Activated T-helper 1 cell treated with anti-CD3 and anti-CD28 coated beads, Interleukin-12 subunit alpha, Interleukin-12 subunit beta, Interleukin-2, Interleukin-4 antibody, amounts not matched to agents 30 ng/mL and 10 ng/mL and 1 ng/mL, durations not matched to agents 14 hours and 24 hours and 36 hours (primary cell): ENCODE measurements at regions of chr4 and their contacts with region 1.

Region 1: DNA sequence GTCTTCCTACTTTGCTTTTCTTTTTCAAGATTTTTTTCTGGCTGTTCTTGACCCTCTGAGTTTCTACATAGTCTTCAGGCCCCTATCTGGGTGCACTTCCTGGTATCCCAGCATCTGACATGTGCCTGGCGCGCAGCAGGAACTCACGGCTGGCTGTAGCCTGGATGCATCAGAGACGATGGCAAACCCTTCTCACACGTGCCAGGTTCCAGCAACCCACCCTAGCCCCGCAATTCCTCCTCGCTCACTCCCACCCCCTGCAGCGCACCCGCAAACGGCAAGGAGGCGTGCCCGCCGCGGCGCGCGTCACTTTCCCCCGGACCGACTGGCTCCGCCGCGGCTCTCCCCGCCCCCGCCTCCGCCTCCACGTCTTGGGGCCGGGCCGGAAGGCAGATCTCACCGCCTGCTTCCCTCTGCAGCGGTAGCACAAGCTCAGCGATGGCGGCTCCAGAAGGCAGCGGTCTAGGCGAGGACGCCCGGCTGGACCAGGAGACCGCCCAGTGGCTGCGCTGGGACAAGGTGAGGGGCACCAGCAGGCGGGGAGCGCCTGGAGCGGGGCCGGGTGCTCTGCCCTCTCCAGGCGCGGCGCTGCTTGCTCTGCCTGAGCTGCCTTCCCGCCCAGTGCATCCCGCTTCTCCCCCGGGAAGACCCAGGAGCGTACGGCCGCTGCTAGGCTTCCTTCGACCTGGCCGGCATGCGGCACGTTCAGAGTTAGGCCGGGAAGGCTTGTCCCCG is at the start of gene PGM2:
- DNase-seq: peak; percentile 88
- H3K4me3 Mint-ChIP-seq: peak within 1 kb of the TSS; percentile 87
- H3K27ac Mint-ChIP-seq: peak within 1 kb of the TSS; percentile 86
- H3K4me1 Mint-ChIP-seq: peaks cover 40% of the 10 kb centered on the region
- H3K27me3 Mint-ChIP-seq: no peaks in the 10 kb centered on the region
- total RNA-seq, gene PGM2: 43.0 and 50.0 TPM in 2 replicates

Region 2: GRCh38 chr4:37502077-37502476 is 324.4 kb before region 1 on chr4:
- intact Hi-C with region 1: no loop called
- DNase-seq: no peak
- H3K4me3 Mint-ChIP-seq: no peak overlapping the region
- H3K27ac Mint-ChIP-seq: no peak overlapping the region
- H3K4me1 Mint-ChIP-seq: no peaks in the 10 kb centered on the region
- H3K27me3 Mint-ChIP-seq: peaks cover 10% of the 10 kb centered on the region

Region 3: GRCh38 chr4:37715889-37716402 is 110.5 kb before region 1 on chr4:
- intact Hi-C with region 1: loop called (anchors 2 kb)
- DNase-seq: peak; percentile 9
- H3K4me3 Mint-ChIP-seq: no peak overlapping the region
- H3K27ac Mint-ChIP-seq: peak overlapping the region; percentile 88
- H3K4me1 Mint-ChIP-seq: peaks cover 24% of the 10 kb centered on the region
- H3K27me3 Mint-ChIP-seq: peaks cover 2% of the 10 kb centered on the region

Region 4: DNA sequence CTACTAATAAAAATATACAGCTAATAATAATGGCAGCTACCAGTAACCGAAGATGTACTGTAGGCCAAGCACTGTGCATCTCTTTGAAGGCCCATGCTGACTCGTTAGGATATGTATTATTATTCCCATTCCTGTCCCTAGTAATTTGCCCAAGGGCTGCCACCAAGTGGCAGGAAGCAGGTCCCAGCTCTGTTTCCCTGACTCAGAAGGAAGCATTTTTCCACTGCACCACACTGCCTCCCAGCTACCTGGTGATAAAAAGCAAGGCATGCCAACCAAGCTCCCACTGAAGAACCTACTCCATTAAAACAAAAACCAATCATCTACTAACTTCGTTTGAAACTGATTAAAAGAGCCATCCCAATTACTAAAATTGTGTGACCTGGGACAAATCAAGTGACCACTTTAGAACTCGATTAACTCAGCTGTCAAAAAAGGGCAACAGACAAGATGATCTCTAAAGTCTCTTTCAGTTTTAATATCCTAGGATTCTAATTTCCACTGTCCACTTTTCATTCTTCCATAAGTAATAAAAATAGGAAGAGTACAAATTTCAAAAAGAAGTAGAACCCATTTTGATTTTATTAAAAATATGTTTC is 24.3 kb before region 1 on chr4:
- intact Hi-C with region 1: loop called (anchors 2 kb)
- DNase-seq: no peak
- H3K4me3 Mint-ChIP-seq: no peak overlapping the region
- H3K27ac Mint-ChIP-seq: no peak overlapping the region
- H3K4me1 Mint-ChIP-seq: no peaks in the 10 kb centered on the region
- H3K27me3 Mint-ChIP-seq: peaks cover 6% of the 10 kb centered on the region

Region 5: DNA sequence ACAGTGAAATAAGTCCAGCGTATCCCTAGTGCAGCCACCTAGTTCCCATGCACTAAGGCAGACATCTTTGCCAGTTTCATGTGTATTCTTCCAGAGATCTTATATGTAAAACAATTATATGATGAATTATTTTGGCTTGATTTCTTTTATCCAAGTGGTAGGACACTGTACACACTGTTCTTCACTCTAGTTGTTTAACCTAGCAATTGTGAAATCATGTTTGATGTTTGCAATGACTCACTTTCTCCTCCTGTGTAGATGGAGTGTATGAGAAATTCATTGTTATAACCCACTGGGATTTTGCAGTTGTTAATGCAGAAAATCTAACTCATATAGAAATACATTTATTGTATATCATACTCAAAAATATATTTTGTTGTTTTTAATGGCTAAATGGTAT is 46.9 kb after region 1 on chr4:
- intact Hi-C with region 1: loop called (anchors 1 kb)
- DNase-seq: no peak
- H3K4me3 Mint-ChIP-seq: no peak overlapping the region
- H3K27ac Mint-ChIP-seq: no peak overlapping the region
- H3K4me1 Mint-ChIP-seq: peaks cover 21% of the 10 kb centered on the region
- H3K27me3 Mint-ChIP-seq: no peaks in the 10 kb centered on the region

Region 6: GRCh38 chr4:37977471-37978247 is 151.2 kb after region 1 on chr4:
- intact Hi-C with region 1: loop called (anchors 1 kb)
- DNase-seq: peak; percentile 70
- H3K4me3 Mint-ChIP-seq: peak overlapping the region; percentile 86
- H3K27ac Mint-ChIP-seq: peak overlapping the region; percentile 81
- H3K4me1 Mint-ChIP-seq: peaks cover 41% of the 10 kb centered on the region
- H3K27me3 Mint-ChIP-seq: no peaks in the 10 kb centered on the region

Region 7: GRCh38 chr4:38319456-38320342 is 493.2 kb after region 1 on chr4:
- intact Hi-C with region 1: loop called (anchors 10 kb)
- DNase-seq: peak; percentile 83
- H3K4me3 Mint-ChIP-seq: peak overlapping the region; percentile 48
- H3K27ac Mint-ChIP-seq: peak overlapping the region; percentile 79
- H3K4me1 Mint-ChIP-seq: peaks cover 55% of the 10 kb centered on the region
- H3K27me3 Mint-ChIP-seq: peaks cover 5% of the 10 kb centered on the region

Region 8: GRCh38 chr4:38663801-38664705 is 837.6 kb after region 1 on chr4 and contains the start of gene KLF3:
- intact Hi-C with region 1: loop called (anchors 5 kb)
- DNase-seq: peak; percentile 86
- H3K4me3 Mint-ChIP-seq: peak within 1 kb of the TSS; percentile 85
- H3K27ac Mint-ChIP-seq: peak within 1 kb of the TSS; percentile 53
- H3K4me1 Mint-ChIP-seq: peaks cover 55% of the 10 kb centered on the region
- H3K27me3 Mint-ChIP-seq: peaks cover 24% of the 10 kb centered on the region
- total RNA-seq, gene KLF3: 1.8 and 1.9 TPM in 2 replicates